Right cardiac atrium (tissue), 5 donors: ENCODE measurements at regions of chr2 and their contacts with region 1.

Region 1: DNA sequence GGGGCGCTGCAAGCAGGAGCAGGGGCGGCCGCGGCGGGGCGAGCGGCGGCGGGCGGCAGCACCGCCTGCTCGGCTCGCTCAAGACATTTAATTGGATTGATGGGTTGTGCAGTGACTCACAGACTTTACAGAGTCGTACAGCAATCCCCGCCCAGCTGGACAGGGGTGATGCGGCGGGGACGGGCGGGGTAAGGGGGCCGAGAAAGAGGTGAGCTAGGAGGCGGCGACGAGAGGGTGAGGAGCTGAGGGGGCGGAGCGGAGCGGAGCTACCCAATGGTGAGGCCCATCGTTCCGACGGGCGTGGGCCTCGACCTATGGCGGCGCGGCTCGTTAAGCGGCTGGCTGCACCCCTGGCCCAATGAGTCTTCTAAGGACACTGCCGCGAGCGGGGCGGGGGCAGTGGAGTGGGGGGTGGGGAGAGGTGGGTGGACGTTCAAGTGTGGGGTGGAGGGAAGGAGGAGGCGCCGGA is 97.1 kb upstream of the SERTAD2 start:
- DNase-seq: peak; percentile 99 to 100 (median 100)
- ATAC-seq: peak; percentile 95 to 97
- H3K4me3 ChIP-seq: peak overlapping the region; percentile 65
- H3K27ac ChIP-seq: peak overlapping the region; percentile 92
- H3K4me1 ChIP-seq: no peaks in the 10 kb centered on the region
- H3K27me3 ChIP-seq: no peaks in the 10 kb centered on the region

Region 2: DNA sequence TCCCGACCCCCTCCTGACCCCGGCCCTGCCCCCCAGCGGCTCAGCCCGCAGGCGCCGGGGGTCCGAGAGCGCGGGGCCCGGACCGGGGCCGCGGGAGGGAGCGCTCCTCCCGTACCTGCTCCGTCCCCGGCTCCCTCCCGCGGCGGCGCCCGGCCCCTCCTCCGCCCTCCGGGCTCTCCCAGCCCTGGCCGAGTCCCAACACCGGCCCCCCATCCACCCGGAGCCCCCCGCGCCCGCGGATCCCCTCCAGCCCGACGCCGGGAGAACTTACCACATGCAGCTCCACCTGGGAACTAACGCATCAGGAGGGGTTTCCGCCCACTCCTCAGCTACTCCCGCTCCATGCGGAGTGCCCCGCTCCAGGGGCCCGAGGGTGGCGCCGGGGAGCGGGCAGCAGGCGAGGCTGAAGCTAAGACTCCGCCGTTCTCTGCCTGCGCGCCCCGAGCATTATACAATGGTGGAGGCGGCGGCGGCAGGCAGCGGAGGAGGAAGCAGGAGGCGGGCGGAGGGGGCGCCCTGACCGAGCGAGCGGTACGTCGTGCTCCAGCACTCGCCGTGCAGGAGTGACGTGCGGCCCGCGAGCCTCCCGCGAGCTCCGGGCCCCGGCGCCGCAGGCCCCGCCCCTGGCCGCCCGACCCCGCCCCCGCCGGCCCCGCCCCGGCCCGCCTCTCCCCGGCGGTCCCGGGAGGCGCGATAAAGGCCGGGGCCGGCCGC is 97.3 kb before region 1 on chr2 and contains the start of gene SERTAD2:
- intact Hi-C with region 1: loop called (anchors 2 to 10 kb)
- DNase-seq: peak; percentile 92 to 97 (median 97)
- ATAC-seq: peak; percentile 94
- H3K4me3 ChIP-seq: peak within 1 kb of the TSS; percentile 96
- H3K27ac ChIP-seq: peak within 1 kb of the TSS; percentile 99
- H3K4me1 ChIP-seq: no peaks in the 10 kb centered on the region
- H3K27me3 ChIP-seq: no peaks in the 10 kb centered on the region
- total RNA-seq, gene SERTAD2: 17.9 to 25.4 (median 20.0) TPM

Region 3: GRCh38 chr2:64797881-64798575 is 47.2 kb after region 1 on chr2:
- intact Hi-C with region 1: no loop called
- DNase-seq: no peak
- ATAC-seq: no peak
- H3K4me3 ChIP-seq: no peak overlapping the region
- H3K27ac ChIP-seq: no peak overlapping the region
- H3K4me1 ChIP-seq: no peaks in the 10 kb centered on the region
- H3K27me3 ChIP-seq: no peaks in the 10 kb centered on the region

Region 4: GRCh38 chr2:64859312-64860212 is 108.7 kb after region 1 on chr2:
- intact Hi-C with region 1: loop called in 3 of 4 experiments (anchors 5 kb)
- DNase-seq: peak; percentile 92 to 96 (median 96)
- ATAC-seq: peak; percentile 90 to 91
- H3K4me3 ChIP-seq: peak overlapping the region; percentile 45
- H3K27ac ChIP-seq: peak overlapping the region; percentile 87
- H3K4me1 ChIP-seq: peaks cover 15% of the 10 kb centered on the region
- H3K27me3 ChIP-seq: no peaks in the 10 kb centered on the region